ENCODE measurements at regions of chr9 and their contacts with region 1.

Region 1: DNA sequence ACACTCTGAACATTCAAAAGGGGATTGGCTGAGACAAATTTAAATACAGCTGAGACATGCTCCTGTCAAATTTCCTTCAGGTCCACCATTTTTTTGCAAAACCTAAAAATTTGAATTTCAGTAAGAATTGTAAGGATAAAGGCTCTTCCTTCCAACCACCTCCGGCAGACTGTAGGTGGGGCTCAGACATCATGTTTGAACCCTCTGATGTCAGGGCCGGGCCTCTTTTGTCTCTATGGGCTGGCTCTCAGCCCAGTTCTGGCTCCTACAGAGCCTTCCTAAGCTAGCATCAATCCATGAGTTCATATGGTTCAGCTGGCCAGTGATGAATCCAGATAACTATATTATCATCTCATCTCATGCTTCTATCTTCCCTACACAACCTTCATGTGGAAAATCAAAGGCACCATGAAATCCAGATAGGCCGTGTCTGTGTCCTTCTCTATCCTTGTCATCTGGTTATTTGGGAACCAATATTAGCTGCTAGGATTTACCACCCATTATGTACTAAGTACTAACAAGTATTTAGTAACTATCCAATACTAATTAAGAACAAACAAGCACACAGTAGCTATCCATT is 44.2 kb downstream of the NIPSNAP3B start:
- DNase-seq: no peak
- ATAC-seq: peak in 3 of 4 donors; percentile 4 to 13 (median 8)
- H3K4me3 ChIP-seq: no peak overlapping the region
- H3K27ac ChIP-seq: peak overlapping the region in 1 of 3 donors; percentile 59
- H3K4me1 ChIP-seq: peaks cover 0 to 25% (median 11%) of the 10 kb centered on the region in 4 donors
- H3K27me3 ChIP-seq: no peaks in the 10 kb centered on the region
- CTCF ChIP-seq: peak in 2 of 4 donors; percentile 13 to 36
- POLR2A ChIP-seq: no peak

Region 2: DNA sequence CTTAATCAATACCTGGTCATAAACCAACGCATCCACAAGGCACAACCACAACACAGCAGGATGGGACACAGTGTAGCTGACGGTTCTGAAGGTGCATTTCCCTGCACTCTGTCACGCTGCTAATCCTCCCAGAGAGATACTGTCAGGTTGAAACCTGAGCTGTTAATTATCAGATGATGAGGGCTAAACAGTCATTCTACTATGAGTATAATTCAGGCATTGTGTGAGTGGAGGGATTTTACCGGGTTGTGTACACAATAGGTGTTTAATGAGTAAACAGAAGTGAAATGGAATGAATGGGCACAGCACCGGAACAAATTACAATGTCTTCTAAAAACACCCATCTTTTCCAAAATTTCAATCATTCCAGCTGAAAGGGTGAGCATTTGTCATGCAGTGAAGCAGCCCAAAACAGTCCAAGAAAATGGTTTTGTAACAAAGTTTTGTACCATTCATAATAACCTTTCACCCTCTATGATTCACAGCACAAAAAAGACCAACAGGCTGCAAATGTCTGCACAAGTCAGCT is 48.4 kb after region 1 on chr9:
- intact Hi-C with region 1: loop called in 1 of 2 experiments (anchors 10 kb)
- DNase-seq: no peak
- ATAC-seq: peak; percentile 24 to 58 (median 39)
- H3K4me3 ChIP-seq: no peak overlapping the region
- H3K27ac ChIP-seq: no peak overlapping the region
- H3K4me1 ChIP-seq: peaks cover 0 to 48% (median 21%) of the 10 kb centered on the region in 4 donors
- H3K27me3 ChIP-seq: no peaks in the 10 kb centered on the region
- CTCF ChIP-seq: no peak
- POLR2A ChIP-seq: no peak

Region 3: GRCh38 chr9:104895572-104895971 is 87.4 kb after region 1 on chr9:
- intact Hi-C with region 1: no loop called
- DNase-seq: no peak
- ATAC-seq: no peak
- H3K4me3 ChIP-seq: no peak overlapping the region
- H3K27ac ChIP-seq: no peak overlapping the region
- H3K4me1 ChIP-seq: peaks cover 0 to 87% (median 20%) of the 10 kb centered on the region in 4 donors
- H3K27me3 ChIP-seq: no peaks in the 10 kb centered on the region
- CTCF ChIP-seq: no peak
- POLR2A ChIP-seq: no peak